ENCODE measurements at regions of chr3 and their contacts with region 1.

Region 1: GRCh38 chr3:141738022-141738890 is at the start of gene RNF7:
- DNase-seq: peak; percentile 99
- H3K4me3 Mint-ChIP-seq: peak within 1 kb of the TSS; percentile 95
- H3K27ac Mint-ChIP-seq: peak within 1 kb of the TSS; percentile 93
- H3K4me1 Mint-ChIP-seq: peaks cover 29% of the 10 kb centered on the region
- H3K27me3 Mint-ChIP-seq: no peaks in the 10 kb centered on the region
- CTCF ChIP-seq: peak; percentile 94
- total RNA-seq, gene RNF7: 108 and 113 TPM in 2 replicates

Region 2: GRCh38 chr3:141460097-141460704 is 278.1 kb before region 1 on chr3:
- CTCF ChIA-PET with region 1: interaction called, 3 read pairs
- intact Hi-C with region 1: loop called (anchors 2 kb)
- DNase-seq: peak; percentile 96
- H3K4me3 Mint-ChIP-seq: no peak overlapping the region
- H3K27ac Mint-ChIP-seq: no peak overlapping the region
- H3K4me1 Mint-ChIP-seq: peaks cover 27% of the 10 kb centered on the region
- H3K27me3 Mint-ChIP-seq: no peaks in the 10 kb centered on the region
- CTCF ChIP-seq: peak; percentile 90

Region 3: DNA sequence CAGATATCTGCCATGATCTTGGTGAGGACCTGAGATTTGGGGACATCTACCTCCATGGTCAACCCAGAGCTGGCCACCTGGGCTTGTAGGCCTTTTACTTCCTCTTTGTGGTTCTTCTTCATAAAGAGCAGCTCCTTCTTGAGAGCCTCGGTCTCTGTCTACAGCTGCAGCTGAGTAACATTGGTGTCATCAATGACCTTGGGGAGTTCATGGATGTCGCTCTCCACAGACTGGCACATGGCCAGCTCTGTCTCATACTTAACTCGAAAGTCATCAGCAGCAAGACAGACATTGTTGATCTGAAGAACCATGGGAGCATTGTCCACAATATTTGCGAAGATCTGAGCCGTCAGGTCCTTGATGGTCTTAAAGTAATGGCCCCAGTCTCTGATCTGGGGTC is 267.1 kb before region 1 on chr3:
- CTCF ChIA-PET with region 1: no interaction called
- intact Hi-C with region 1: no loop called
- DNase-seq: no peak
- H3K4me3 Mint-ChIP-seq: no peak overlapping the region
- H3K27ac Mint-ChIP-seq: no peak overlapping the region
- H3K4me1 Mint-ChIP-seq: no peaks in the 10 kb centered on the region
- H3K27me3 Mint-ChIP-seq: no peaks in the 10 kb centered on the region
- CTCF ChIP-seq: no peak

Region 4: DNA sequence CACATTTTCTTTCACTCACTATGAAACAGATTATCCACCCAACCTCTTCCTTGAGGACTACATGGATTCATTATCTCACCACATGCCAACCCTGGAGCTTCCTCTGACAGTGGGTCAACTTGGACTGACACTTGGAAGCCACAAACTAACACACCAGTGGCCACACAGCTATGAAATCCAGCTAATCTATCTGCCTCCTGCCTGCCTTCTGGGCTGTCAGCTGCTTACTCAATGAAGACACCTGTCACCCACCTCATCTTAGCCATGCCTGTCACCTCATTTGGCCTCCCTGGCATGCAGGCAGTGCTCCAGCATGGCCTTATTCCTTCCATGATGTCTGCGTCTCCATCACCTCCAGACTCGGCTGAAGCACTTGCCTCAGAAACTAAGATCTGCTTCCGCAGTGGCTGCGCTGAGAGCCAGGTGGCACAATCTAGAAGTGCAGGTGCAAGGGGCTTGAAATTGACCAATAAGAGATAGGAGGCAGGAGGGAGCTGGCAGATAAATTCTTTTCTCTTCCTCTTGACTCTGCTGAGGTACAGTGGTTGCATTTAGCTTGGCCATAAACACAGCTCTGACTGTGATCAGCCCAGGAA is 105.4 kb before region 1 on chr3:
- CTCF ChIA-PET with region 1: interaction called, 14 read pairs
- intact Hi-C with region 1: no loop called
- DNase-seq: no peak
- H3K4me3 Mint-ChIP-seq: no peak overlapping the region
- H3K27ac Mint-ChIP-seq: no peak overlapping the region
- H3K4me1 Mint-ChIP-seq: no peaks in the 10 kb centered on the region
- H3K27me3 Mint-ChIP-seq: no peaks in the 10 kb centered on the region
- CTCF ChIP-seq: no peak

Region 5: GRCh38 chr3:141875374-141875892 is 137.2 kb after region 1 on chr3:
- CTCF ChIA-PET with region 1: interaction called, 12 read pairs
- intact Hi-C with region 1: loop called (anchors 1 kb)
- DNase-seq: peak; percentile 95
- H3K4me3 Mint-ChIP-seq: peak overlapping the region; percentile 99
- H3K27ac Mint-ChIP-seq: peak overlapping the region; percentile 81
- H3K4me1 Mint-ChIP-seq: peaks cover 36% of the 10 kb centered on the region
- H3K27me3 Mint-ChIP-seq: no peaks in the 10 kb centered on the region
- CTCF ChIP-seq: peak; percentile 94

Region 6: DNA sequence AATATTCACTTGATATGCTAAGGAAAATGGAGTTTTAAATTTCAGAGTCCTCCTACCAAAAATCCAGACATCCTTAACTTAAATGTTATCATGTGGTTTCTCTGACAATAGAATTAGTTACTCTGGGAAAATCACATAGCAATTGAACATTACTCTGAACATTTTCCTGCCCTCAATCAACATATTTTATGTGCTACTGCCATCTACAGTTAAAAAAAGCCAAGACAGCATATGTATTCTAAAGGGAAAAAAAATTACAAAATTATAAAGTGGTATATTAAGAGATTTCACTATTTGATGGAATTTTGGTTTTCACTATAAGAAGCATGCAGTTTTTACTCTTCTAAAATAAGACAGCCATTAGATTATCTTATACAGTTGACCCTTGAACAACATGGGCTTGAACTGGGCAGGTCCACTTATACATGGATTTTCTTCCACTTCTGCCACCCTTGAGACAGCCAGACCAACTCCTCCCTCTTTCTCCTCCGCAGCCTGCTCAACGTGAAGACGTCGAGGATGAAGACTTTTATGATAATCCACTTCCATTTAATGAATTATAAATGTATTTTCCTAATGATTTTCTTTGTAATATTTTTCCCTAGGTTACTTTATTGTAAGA is 260.5 kb after region 1 on chr3:
- CTCF ChIA-PET with region 1: no interaction called
- intact Hi-C with region 1: loop called (anchors 2 kb)
- DNase-seq: no peak
- H3K4me3 Mint-ChIP-seq: no peak overlapping the region
- H3K27ac Mint-ChIP-seq: no peak overlapping the region
- H3K4me1 Mint-ChIP-seq: no peaks in the 10 kb centered on the region
- H3K27me3 Mint-ChIP-seq: no peaks in the 10 kb centered on the region
- CTCF ChIP-seq: peak; percentile 36